Activated CD4-positive, alpha-beta memory T cell treated with anti-CD3 and anti-CD28 coated beads, Interleukin-2, amount 10 ng/mL, durations not matched to agents 7 days and 5 days (primary cell): ENCODE measurements at regions of chr12 and their contacts with region 1.

Region 1: GRCh38 chr12:3896801-3897331 is 23.7 kb upstream of the PARP11 start:
- DNase-seq: no peak
- H3K4me3 Mint-ChIP-seq: peak overlapping the region; percentile 51
- H3K27ac Mint-ChIP-seq: peak overlapping the region; percentile 97
- H3K4me1 Mint-ChIP-seq: peaks cover 37% of the 10 kb centered on the region
- H3K27me3 Mint-ChIP-seq: no peaks in the 10 kb centered on the region

Region 2: DNA sequence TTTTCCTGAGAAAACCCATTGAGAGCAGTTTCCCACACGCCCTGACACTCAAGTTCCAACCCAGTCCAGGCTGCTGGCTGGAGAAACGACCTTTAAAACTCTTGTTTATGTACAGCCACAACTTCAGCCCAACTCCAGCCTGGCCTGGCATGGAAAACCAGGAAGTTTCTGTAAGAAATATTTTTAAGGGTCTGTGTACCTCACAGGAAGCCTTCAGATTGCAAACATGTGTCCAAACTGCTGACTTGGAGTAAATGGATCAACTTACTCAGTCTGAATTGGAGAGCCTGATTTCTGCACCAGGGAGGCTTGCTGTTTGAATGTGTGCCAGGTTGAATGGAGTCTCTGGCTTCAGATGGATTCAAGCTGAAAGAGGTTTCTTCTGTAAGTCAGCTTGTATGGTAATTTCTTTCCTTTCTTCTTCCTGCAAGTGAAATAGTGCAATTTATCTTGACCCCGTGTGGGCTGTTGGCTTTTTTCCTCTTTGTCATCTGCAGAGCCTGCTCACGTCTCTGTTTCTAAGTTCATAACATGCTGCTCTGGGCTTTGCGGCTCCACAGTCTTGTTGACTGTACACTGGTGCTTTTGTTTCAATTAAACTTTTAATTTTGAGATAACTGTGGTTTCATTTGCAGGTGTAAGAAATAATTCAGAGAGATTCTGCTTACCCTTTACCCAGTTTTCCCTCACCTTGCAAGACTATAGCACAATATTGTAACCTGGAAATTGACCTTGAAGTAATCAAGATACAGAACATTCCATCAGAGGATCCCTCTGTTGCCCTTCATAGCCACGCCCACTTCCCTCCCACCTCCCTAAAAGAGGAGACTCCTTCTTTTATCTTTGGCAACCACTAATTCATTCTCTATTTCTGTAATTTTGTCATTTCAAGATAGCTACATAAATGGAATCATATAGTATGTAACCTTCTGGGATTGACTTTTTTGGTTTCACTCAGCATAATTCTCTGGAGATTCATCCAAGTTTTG is 515.5 kb before region 1 on chr12:
- CTCF ChIA-PET with region 1: no interaction called
- POLR2A ChIA-PET with region 1: no interaction called
- DNase-seq: no peak
- H3K4me3 Mint-ChIP-seq: no peak overlapping the region
- H3K27ac Mint-ChIP-seq: no peak overlapping the region
- H3K4me1 Mint-ChIP-seq: no peaks in the 10 kb centered on the region
- H3K27me3 Mint-ChIP-seq: peaks cover 29% of the 10 kb centered on the region

Region 3: GRCh38 chr12:3920351-3921150 is 23.7 kb after region 1 on chr12:
- CTCF ChIA-PET with region 1: no interaction called
- POLR2A ChIA-PET with region 1: no interaction called
- DNase-seq: no peak
- H3K4me3 Mint-ChIP-seq: no peak overlapping the region
- H3K27ac Mint-ChIP-seq: no peak overlapping the region
- H3K4me1 Mint-ChIP-seq: peaks cover 4% of the 10 kb centered on the region
- H3K27me3 Mint-ChIP-seq: peaks cover 18% of the 10 kb centered on the region

Region 4: DNA sequence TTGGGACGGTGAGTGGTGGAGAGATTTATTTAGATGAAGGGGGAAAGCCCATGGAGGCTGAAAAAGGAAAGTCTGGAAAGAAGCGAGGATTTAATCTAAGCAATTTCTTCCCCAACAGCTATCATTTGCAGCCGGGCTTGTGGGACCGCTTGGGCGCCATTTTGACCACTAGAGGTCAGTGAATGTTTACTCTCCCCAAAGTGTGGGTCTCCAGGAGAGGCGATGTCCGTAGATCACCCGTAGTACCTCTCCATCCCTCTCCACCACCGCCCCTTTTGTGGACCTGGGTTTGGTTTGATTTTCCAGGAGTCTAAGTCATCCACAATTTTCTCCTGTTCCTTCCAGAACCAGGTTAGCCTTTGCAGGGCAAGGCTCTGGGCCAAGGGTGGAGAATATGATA is 67.6 kb after region 1 on chr12:
- CTCF ChIA-PET with region 1: interaction called, 16 read pairs
- POLR2A ChIA-PET with region 1: interaction called, 11 read pairs
- DNase-seq: no peak
- H3K4me3 Mint-ChIP-seq: no peak overlapping the region
- H3K27ac Mint-ChIP-seq: no peak overlapping the region
- H3K4me1 Mint-ChIP-seq: peaks cover 19% of the 10 kb centered on the region
- H3K27me3 Mint-ChIP-seq: no peaks in the 10 kb centered on the region